Endothelial cell of umbilical vein (primary cell): ENCODE measurements at regions of chr3 and their contacts with region 1.

Region 1: GRCh38 chr3:134212906-134213665 is 37.6 kb downstream of the RYK start:
- DNase-seq: peak; percentile 81
- H3K4me3 ChIP-seq: no peak overlapping the region
- H3K27ac ChIP-seq: no peak overlapping the region
- H3K4me1 ChIP-seq: peaks cover 3% of the 10 kb centered on the region
- H3K27me3 ChIP-seq: no peaks in the 10 kb centered on the region
- CTCF ChIP-seq: peak; percentile 91
- POLR2A ChIP-seq: no peak

Region 2: GRCh38 chr3:133821767-133822638 is 391.1 kb before region 1 on chr3:
- CTCF ChIA-PET with region 1: interaction called, 23 read pairs
- POLR2A ChIA-PET with region 1: no interaction called
- dilution Hi-C with region 1: no loop called
- intact Hi-C with region 1: loop called (anchors 1 kb)
- DNase-seq: peak; percentile 44
- H3K4me3 ChIP-seq: no peak overlapping the region
- H3K27ac ChIP-seq: no peak overlapping the region
- H3K4me1 ChIP-seq: no peaks in the 10 kb centered on the region
- H3K27me3 ChIP-seq: no peaks in the 10 kb centered on the region
- CTCF ChIP-seq: peak in 1 of 2 donors; percentile 18
- POLR2A ChIP-seq: no peak

Region 3: GRCh38 chr3:133943639-133944141 is 269.4 kb before region 1 on chr3:
- CTCF ChIA-PET with region 1: interaction called, 82 read pairs
- POLR2A ChIA-PET with region 1: interaction called, 3 read pairs
- dilution Hi-C with region 1: loop called (anchors 25 kb)
- intact Hi-C with region 1: no loop called
- DNase-seq: peak; percentile 87
- H3K4me3 ChIP-seq: no peak overlapping the region
- H3K27ac ChIP-seq: peak overlapping the region; percentile 88
- H3K4me1 ChIP-seq: peaks cover 66% of the 10 kb centered on the region
- H3K27me3 ChIP-seq: no peaks in the 10 kb centered on the region
- CTCF ChIP-seq: no peak
- POLR2A ChIP-seq: peak; percentile 31

Region 4: GRCh38 chr3:134197681-134198261 is 15.3 kb before region 1 on chr3:
- CTCF ChIA-PET with region 1: interaction called, 147 read pairs
- POLR2A ChIA-PET with region 1: no interaction called
- dilution Hi-C with region 1: no loop called
- intact Hi-C with region 1: loop called (anchors 1 kb)
- DNase-seq: peak; percentile 72
- H3K4me3 ChIP-seq: no peak overlapping the region
- H3K27ac ChIP-seq: no peak overlapping the region
- H3K4me1 ChIP-seq: peaks cover 23% of the 10 kb centered on the region
- H3K27me3 ChIP-seq: no peaks in the 10 kb centered on the region
- CTCF ChIP-seq: peak; percentile 55 to 61
- POLR2A ChIP-seq: no peak

Region 5: DNA sequence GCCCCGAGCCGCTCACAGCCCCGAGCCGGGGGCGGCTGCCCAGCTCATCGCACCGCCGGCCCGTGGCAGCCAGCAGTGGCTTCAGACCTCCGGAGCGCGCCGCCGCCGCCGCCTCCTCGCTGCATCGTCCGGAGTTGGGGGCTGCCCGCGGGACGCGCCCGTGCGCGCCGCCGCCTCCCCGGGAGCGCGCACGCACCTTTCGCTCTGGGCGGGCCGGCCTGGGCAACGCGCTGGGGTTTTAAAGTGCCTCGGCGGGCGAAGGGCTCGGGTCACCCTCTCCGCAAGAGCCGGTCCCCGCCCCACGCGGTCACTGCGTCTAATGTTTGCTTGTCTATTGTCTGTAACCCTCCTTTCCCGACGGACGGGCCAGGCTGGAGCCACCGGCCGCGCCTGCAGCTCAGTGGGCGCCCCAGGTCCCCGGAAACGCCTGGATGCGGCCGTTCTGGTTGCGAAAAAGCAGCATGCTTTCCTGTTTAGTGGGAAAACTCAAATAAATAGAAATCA is 37.7 kb after region 1 on chr3 and contains the start of gene RYK:
- CTCF ChIA-PET with region 1: interaction called, 7 read pairs
- POLR2A ChIA-PET with region 1: no interaction called
- dilution Hi-C with region 1: no loop called
- intact Hi-C with region 1: loop called (anchors 1 kb)
- DNase-seq: peak; percentile 77
- H3K4me3 ChIP-seq: peak within 1 kb of the TSS; percentile 52 to 91 (median 89)
- H3K27ac ChIP-seq: peak within 1 kb of the TSS; percentile 46
- H3K4me1 ChIP-seq: peaks cover 18% of the 10 kb centered on the region
- H3K27me3 ChIP-seq: peaks cover 0 to 3% of the 10 kb centered on the region in 2 experiments
- CTCF ChIP-seq: no peak
- POLR2A ChIP-seq: peak; percentile 65
- total RNA-seq, gene RYK: 44.1 and 48.3 TPM in 2 replicates

Region 6: DNA sequence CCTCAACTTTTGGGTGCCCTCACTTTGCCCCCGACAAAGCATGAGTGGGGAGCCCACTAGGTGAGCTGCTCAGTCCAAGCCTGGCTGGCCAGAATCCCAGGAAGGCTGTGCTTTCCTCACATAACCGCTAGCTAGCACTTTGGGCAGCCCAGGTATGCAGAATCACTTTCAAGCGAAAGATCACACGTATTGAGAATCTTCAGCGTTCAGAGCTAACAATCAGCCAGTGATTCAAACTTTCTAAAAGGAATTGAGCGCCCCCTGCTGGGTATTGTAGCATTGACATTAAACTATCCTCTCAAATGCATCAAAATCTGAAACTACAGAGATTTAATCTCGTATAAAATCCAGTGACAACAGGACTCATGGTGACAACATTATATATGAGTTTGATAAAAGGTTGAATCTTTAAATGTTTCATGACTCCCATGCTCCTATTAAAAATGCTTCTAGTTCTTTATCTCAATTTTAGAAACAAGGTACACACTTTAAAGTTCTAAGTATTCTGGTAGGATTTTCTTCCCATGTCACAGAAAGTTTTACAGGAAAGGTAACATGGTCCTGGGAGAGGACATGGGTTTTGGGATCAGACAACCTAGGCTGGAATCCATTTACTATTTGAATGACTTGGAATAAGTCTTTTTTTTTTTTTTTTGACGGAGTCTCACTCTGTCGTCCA is 260.9 kb after region 1 on chr3:
- CTCF ChIA-PET with region 1: interaction called, 54 read pairs
- POLR2A ChIA-PET with region 1: no interaction called
- dilution Hi-C with region 1: no loop called
- intact Hi-C with region 1: loop called (anchors 1 kb)
- DNase-seq: peak; percentile 73
- H3K4me3 ChIP-seq: no peak overlapping the region
- H3K27ac ChIP-seq: no peak overlapping the region
- H3K4me1 ChIP-seq: peaks cover 13% of the 10 kb centered on the region
- H3K27me3 ChIP-seq: no peaks in the 10 kb centered on the region
- CTCF ChIP-seq: peak; percentile 61 to 63
- POLR2A ChIP-seq: no peak